ENCODE measurements at regions of chr12 and their contacts with region 1.

Region 1: GRCh38 chr12:108562348-108563135 is at the start of gene ISCU:
- DNase-seq: peak; percentile 98
- H3K4me3 ChIP-seq: peak within 1 kb of the TSS; percentile 79
- H3K27ac ChIP-seq: peak within 1 kb of the TSS; percentile 97
- H3K4me1 ChIP-seq: peaks cover 35% of the 10 kb centered on the region
- H3K27me3 ChIP-seq: no peaks in the 10 kb centered on the region
- CTCF ChIP-seq: no peak
- total RNA-seq, gene ISCU: 73.4 and 79.3 TPM in 2 replicates

Region 2: GRCh38 chr12:108618079-108618952 is 55.8 kb after region 1 on chr12:
- CTCF ChIA-PET with region 1: interaction called, 5 read pairs
- POLR2A ChIA-PET with region 1: no interaction called
- intact Hi-C with region 1: loop called (anchors 1 kb)
- DNase-seq: peak; percentile 87
- H3K4me3 ChIP-seq: no peak overlapping the region
- H3K27ac ChIP-seq: no peak overlapping the region
- H3K4me1 ChIP-seq: peaks cover 8% of the 10 kb centered on the region
- H3K27me3 ChIP-seq: no peaks in the 10 kb centered on the region
- CTCF ChIP-seq: peak; percentile 97

Region 3: GRCh38 chr12:108731105-108731865 is 168.7 kb after region 1 on chr12 and contains the start of gene CORO1C:
- CTCF ChIA-PET with region 1: no interaction called
- POLR2A ChIA-PET with region 1: no interaction called
- intact Hi-C with region 1: loop called (anchors 10 kb)
- DNase-seq: peak; percentile 98
- H3K4me3 ChIP-seq: peak within 1 kb of the TSS; percentile 90
- H3K27ac ChIP-seq: peak within 1 kb of the TSS; percentile 92
- H3K4me1 ChIP-seq: peaks cover 30% of the 10 kb centered on the region
- H3K27me3 ChIP-seq: no peaks in the 10 kb centered on the region
- CTCF ChIP-seq: peak; percentile 91
- total RNA-seq, gene CORO1C: 206 and 208 TPM in 2 replicates

Region 4: GRCh38 chr12:108803428-108804105 is 241.0 kb after region 1 on chr12:
- CTCF ChIA-PET with region 1: no interaction called
- POLR2A ChIA-PET with region 1: no interaction called
- intact Hi-C with region 1: loop called (anchors 5 kb)
- DNase-seq: peak; percentile 88
- H3K4me3 ChIP-seq: no peak overlapping the region
- H3K27ac ChIP-seq: peak overlapping the region; percentile 37
- H3K4me1 ChIP-seq: peaks cover 25% of the 10 kb centered on the region
- H3K27me3 ChIP-seq: no peaks in the 10 kb centered on the region
- CTCF ChIP-seq: peak; percentile 96

Region 5: GRCh38 chr12:108856428-108857157 is 294.1 kb after region 1 on chr12:
- CTCF ChIA-PET with region 1: no interaction called
- POLR2A ChIA-PET with region 1: interaction called, 7 read pairs
- intact Hi-C with region 1: loop called (anchors 2 kb)
- DNase-seq: peak; percentile 50
- H3K4me3 ChIP-seq: peak overlapping the region; percentile 85
- H3K27ac ChIP-seq: peak overlapping the region; percentile 89
- H3K4me1 ChIP-seq: peaks cover 38% of the 10 kb centered on the region
- H3K27me3 ChIP-seq: no peaks in the 10 kb centered on the region
- CTCF ChIP-seq: no peak

Region 6: GRCh38 chr12:108950991-108951739 is 388.6 kb after region 1 on chr12:
- CTCF ChIA-PET with region 1: no interaction called
- POLR2A ChIA-PET with region 1: no interaction called
- intact Hi-C with region 1: loop called (anchors 5 kb)
- DNase-seq: peak; percentile 73
- H3K4me3 ChIP-seq: peak overlapping the region; percentile 12
- H3K27ac ChIP-seq: no peak overlapping the region
- H3K4me1 ChIP-seq: peaks cover 7% of the 10 kb centered on the region
- H3K27me3 ChIP-seq: no peaks in the 10 kb centered on the region
- CTCF ChIP-seq: peak; percentile 91

Measured in A673 (cell line).